Endothelial cell of umbilical vein (primary cell): ENCODE measurements at regions of chr1 and their contacts with region 1.

Region 1: GRCh38 chr1:9110669-9111356 is 18.1 kb downstream of the GPR157 start:
- DNase-seq: peak; percentile 85
- H3K4me3 ChIP-seq: no peak overlapping the region
- H3K27ac ChIP-seq: no peak overlapping the region
- H3K4me1 ChIP-seq: no peaks in the 10 kb centered on the region
- H3K27me3 ChIP-seq: no peaks in the 10 kb centered on the region
- CTCF ChIP-seq: peak; percentile 93
- POLR2A ChIP-seq: no peak

Region 2: DNA sequence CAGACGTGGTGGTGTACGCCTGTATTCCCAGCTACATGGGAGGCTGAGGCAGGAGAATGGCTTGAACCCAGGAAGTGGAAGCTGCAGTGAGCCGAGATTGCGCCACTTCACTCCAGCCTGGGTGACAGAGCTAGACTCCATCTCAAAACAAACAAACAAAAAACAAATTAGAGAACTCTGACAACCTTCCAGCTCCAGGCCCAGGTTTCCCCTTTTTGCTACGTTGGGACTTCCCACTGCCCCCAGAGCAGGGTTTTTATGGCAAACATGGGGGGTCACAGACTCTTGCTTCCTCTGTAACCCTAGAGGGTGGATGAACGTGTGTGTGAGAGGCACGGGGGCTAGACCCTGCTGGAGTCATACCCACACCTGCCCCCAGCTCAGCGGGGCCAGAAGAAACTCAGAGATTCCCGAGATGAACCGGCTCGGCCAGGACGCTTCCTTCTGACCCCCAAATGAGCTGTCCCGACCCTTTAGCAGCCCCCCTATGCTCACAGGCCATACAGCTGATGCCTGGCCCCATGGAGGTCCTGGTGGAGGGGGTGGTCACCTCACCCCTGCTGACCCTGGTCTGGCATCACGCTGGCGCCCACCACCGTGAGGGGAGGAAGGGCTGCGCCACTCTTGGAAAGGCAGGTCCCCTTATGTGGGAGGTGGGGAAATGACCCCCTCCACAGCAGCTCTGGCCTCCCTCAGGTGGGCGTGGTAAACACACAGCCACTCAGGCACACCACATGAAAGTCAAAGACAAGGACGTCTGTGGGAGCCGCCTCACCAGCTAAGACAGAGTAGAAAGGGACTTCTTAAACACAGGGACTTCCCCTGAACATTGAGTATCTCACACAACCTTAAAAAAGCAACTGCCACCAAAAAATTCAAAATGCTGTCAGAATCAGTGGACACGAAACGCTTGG is 10.9 kb after region 1 on chr1:
- CTCF ChIA-PET with region 1: interaction called, 48 read pairs
- POLR2A ChIA-PET with region 1: no interaction called
- dilution Hi-C with region 1: no loop called
- intact Hi-C with region 1: no loop called
- DNase-seq: no peak
- H3K4me3 ChIP-seq: no peak overlapping the region
- H3K27ac ChIP-seq: no peak overlapping the region
- H3K4me1 ChIP-seq: no peaks in the 10 kb centered on the region
- H3K27me3 ChIP-seq: no peaks in the 10 kb centered on the region
- CTCF ChIP-seq: no peak
- POLR2A ChIP-seq: no peak

Region 3: GRCh38 chr1:9145021-9145668 is 34.3 kb after region 1 on chr1:
- CTCF ChIA-PET with region 1: interaction called, 13 read pairs
- POLR2A ChIA-PET with region 1: no interaction called
- dilution Hi-C with region 1: no loop called
- intact Hi-C with region 1: no loop called
- DNase-seq: no peak
- H3K4me3 ChIP-seq: no peak overlapping the region
- H3K27ac ChIP-seq: no peak overlapping the region
- H3K4me1 ChIP-seq: peaks cover 9% of the 10 kb centered on the region
- H3K27me3 ChIP-seq: no peaks in the 10 kb centered on the region
- CTCF ChIP-seq: no peak
- POLR2A ChIP-seq: no peak

Region 4: GRCh38 chr1:9196129-9197040 is 85.6 kb after region 1 on chr1:
- CTCF ChIA-PET with region 1: interaction called, 84 read pairs
- POLR2A ChIA-PET with region 1: no interaction called
- dilution Hi-C with region 1: no loop called
- intact Hi-C with region 1: loop called (anchors 1 kb)
- DNase-seq: peak; percentile 66
- H3K4me3 ChIP-seq: no peak overlapping the region
- H3K27ac ChIP-seq: no peak overlapping the region
- H3K4me1 ChIP-seq: peaks cover 14% of the 10 kb centered on the region
- H3K27me3 ChIP-seq: peaks cover 2 to 5% of the 10 kb centered on the region in 2 experiments
- CTCF ChIP-seq: peak; percentile 74 to 75
- POLR2A ChIP-seq: no peak

Region 5: DNA sequence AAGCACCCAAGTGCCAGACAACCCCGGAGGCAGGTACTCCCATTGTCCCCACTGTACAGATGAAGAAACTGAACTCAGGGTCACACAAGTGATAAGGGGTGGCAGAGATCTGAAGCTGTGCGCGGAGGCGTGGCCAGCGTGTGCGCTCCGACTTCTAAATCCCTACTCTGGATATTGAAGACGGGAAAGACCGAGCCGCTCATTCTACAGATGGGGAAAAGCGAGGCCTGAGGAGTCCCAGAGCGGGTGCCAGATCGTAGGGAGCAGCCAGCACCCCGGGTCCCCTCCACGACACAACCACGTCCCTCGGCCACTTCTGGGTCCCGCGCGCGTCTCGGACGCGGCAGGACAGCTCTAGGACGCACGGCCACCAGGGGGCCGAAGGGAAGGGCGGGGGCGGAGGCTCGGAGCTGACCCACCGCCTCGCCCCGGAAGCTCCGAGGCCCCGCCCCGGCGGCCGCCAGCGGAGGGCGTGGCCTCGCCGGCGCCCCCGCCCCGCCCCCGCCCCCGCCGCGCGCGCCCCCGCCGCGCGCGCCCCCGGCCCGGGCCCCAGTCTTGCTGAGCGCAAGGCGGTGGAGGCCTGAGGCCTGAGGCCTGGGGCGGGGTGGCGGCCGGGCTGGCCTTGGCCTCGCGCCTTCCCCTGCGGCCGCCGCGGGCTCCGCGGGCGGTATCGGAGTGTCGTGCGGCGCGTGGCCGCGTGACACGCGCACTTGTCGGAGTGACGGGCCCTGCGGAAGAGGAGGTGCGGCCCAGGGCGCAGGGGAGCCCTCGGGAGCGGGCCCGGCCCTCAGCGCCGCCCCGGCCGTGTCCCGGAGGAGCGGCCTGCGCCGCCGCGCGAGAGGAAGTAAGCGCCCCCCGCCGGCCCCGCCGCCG is 123.6 kb after region 1 on chr1 and contains the start of gene H6PD:
- CTCF ChIA-PET with region 1: interaction called, 19 read pairs
- POLR2A ChIA-PET with region 1: interaction called, 5 read pairs
- dilution Hi-C with region 1: no loop called
- intact Hi-C with region 1: no loop called
- DNase-seq: peak; percentile 74
- H3K4me3 ChIP-seq: peak within 1 kb of the TSS; percentile 58 to 82 (median 66)
- H3K27ac ChIP-seq: peak within 1 kb of the TSS; percentile 75
- H3K4me1 ChIP-seq: peaks cover 21% of the 10 kb centered on the region
- H3K27me3 ChIP-seq: no peaks in the 10 kb centered on the region
- CTCF ChIP-seq: peak; percentile 68 to 76
- POLR2A ChIP-seq: peak; percentile 96
- total RNA-seq, gene H6PD: 29.0 and 40.1 TPM in 2 replicates

Region 6: GRCh38 chr1:9270290-9270883 is 159.6 kb after region 1 on chr1:
- CTCF ChIA-PET with region 1: interaction called, 26 read pairs
- POLR2A ChIA-PET with region 1: no interaction called
- dilution Hi-C with region 1: no loop called
- intact Hi-C with region 1: no loop called
- DNase-seq: no peak
- H3K4me3 ChIP-seq: no peak overlapping the region
- H3K27ac ChIP-seq: no peak overlapping the region
- H3K4me1 ChIP-seq: peaks cover 4% of the 10 kb centered on the region
- H3K27me3 ChIP-seq: no peaks in the 10 kb centered on the region
- CTCF ChIP-seq: no peak
- POLR2A ChIP-seq: no peak

Region 7: GRCh38 chr1:9494929-9495758 is 384.3 kb after region 1 on chr1:
- CTCF ChIA-PET with region 1: interaction called, 27 read pairs
- POLR2A ChIA-PET with region 1: no interaction called
- dilution Hi-C with region 1: no loop called
- intact Hi-C with region 1: no loop called
- DNase-seq: peak; percentile 42
- H3K4me3 ChIP-seq: peak overlapping the region in 2 of 3 experiments; percentile 15 to 22
- H3K27ac ChIP-seq: no peak overlapping the region
- H3K4me1 ChIP-seq: no peaks in the 10 kb centered on the region
- H3K27me3 ChIP-seq: peaks cover 0 to 4% of the 10 kb centered on the region in 2 experiments
- CTCF ChIP-seq: peak; percentile 92 to 97
- POLR2A ChIP-seq: no peak